ENCODE measurements at regions of chr18 and their contacts with region 1.

Region 1: GRCh38 chr18:59837586-59837985 is 62.2 kb upstream of the PMAIP1 start:
- DNase-seq: peak; percentile 53
- H3K4me3 Mint-ChIP-seq: no peak overlapping the region
- H3K27ac Mint-ChIP-seq: no peak overlapping the region
- H3K4me1 Mint-ChIP-seq: peaks cover 10% of the 10 kb centered on the region
- H3K27me3 Mint-ChIP-seq: peaks cover 2% of the 10 kb centered on the region

Region 2: DNA sequence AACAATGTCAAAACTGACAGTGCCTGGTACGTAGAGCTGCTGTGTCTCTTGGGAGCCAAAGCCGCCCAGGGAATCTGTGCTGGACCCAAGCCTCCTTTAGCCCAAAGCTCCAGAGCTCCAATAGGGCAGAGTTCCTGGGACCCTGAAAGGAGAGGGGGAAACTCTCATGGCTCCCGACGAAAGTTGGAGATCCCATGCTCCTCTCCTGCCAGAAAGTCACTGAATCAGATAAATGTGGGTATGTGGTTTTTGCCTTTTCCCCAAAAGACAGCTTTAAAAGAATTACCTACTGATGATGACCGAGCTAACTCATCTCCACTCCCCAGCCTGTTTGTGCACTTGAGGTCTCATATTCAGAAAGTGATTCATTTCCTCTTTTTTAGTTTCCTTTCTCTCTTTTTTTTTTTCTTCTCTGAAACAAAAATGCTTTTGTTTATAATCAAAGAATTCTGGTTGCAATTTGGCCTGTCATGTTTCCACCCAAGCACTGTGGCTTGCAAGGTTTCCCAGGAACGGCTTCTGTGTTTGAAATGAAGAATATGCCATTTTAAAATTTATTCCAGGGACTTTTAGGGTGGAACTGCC is 48.1 kb after region 1 on chr18:
- CTCF ChIA-PET with region 1: interaction called, 10 read pairs
- POLR2A ChIA-PET with region 1: interaction called, 6 read pairs
- intact Hi-C with region 1: loop called (anchors 1 kb)
- DNase-seq: peak; percentile 46
- H3K4me3 Mint-ChIP-seq: peak overlapping the region; percentile 27
- H3K27ac Mint-ChIP-seq: peak overlapping the region; percentile 63
- H3K4me1 Mint-ChIP-seq: peaks cover 37% of the 10 kb centered on the region
- H3K27me3 Mint-ChIP-seq: no peaks in the 10 kb centered on the region

Region 3: DNA sequence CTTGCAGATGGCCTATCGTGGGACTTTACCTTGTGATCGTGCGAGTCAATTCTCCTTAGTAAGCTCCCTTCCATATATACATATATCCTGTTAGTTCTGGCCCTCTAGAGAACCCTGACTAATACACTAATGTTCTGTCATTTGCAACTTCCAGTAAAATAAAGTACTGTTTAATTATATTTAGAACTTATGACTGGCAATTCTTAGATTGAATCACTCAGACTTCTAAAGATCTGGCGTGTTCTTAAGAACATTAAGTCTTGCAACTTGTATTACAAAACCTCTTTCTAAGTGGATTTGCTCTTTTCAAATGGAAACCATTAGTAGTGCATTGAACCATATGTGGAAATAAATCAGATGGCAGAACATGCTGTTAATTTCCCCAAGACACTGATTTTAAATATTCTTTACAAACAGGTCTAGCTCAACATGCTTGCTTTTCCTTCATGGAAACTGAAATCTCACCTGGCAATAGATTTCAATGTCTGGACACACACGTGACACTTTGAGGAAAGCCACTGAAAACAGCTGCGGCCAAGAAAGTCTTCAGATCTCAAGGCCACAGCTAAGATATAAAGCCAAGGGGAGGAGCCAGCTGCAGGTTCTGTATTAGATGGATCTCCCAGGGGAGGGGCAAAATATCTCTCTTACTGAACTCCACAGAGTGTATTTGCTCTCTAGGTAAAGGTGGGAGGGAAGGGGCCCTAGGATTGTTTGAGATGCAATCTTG is 112.8 kb after region 1 on chr18:
- CTCF ChIA-PET with region 1: interaction called, 10 read pairs
- POLR2A ChIA-PET with region 1: no interaction called
- intact Hi-C with region 1: loop called (anchors 1 kb)
- DNase-seq: peak; percentile 35
- H3K4me3 Mint-ChIP-seq: no peak overlapping the region
- H3K27ac Mint-ChIP-seq: peak overlapping the region; percentile 68
- H3K4me1 Mint-ChIP-seq: peaks cover 49% of the 10 kb centered on the region
- H3K27me3 Mint-ChIP-seq: no peaks in the 10 kb centered on the region

Region 4: GRCh38 chr18:59988098-59988706 is 150.6 kb after region 1 on chr18:
- CTCF ChIA-PET with region 1: interaction called, 14 read pairs
- POLR2A ChIA-PET with region 1: no interaction called
- intact Hi-C with region 1: loop called (anchors 1 kb)
- DNase-seq: peak; percentile 64
- H3K4me3 Mint-ChIP-seq: no peak overlapping the region
- H3K27ac Mint-ChIP-seq: no peak overlapping the region
- H3K4me1 Mint-ChIP-seq: no peaks in the 10 kb centered on the region
- H3K27me3 Mint-ChIP-seq: peaks cover 12% of the 10 kb centered on the region